HepG2 (cell line): ENCODE measurements at regions of chrX and their contacts with region 1.

Region 1: DNA sequence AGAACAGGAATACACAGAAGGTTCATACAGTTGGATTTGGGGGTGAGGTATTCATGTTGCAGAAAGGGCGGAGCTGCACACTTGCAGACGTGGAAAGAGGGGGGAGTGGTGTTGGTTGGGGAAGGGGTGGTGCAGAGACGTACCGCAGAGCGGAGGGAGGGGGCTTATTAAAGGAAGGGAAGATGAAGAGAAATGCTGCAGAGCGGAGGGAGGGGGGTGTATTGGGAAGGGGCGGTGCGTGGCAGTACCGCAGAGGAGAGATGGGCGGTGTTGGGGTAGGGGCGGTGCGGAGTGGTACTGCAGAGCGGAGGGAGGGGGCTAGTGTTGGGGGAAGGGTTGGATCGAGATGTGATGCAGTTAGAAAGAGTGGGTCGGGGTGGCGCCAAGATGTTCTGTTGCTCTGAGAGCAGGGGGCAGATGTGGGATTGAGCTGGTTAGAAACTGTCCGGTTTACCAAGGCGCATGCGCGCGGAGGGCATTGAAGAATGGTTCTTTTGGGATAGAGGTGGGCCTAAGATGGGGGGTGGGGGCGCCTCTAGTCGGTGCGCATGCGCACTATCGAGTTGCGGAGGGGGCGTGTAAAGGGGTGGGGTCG is 900 bp downstream of the TRO start:
- DNase-seq: peak; percentile 40
- ATAC-seq: peak; percentile 82
- H3K4me3 ChIP-seq: peak overlapping the region; percentile 60 to 75 (median 66)
- H3K27ac ChIP-seq: no peak overlapping the region
- H3K4me1 ChIP-seq: no peaks in the 10 kb centered on the region
- H3K27me3 ChIP-seq: no peaks in the 10 kb centered on the region; a peak in 1 of 5 replicates
- CTCF ChIP-seq: no peak
- EP300 ChIP-seq: no peak
- POLR2A ChIP-seq: no peak
- RAD21 ChIP-seq: no peak

Region 2: GRCh38 chrX:54994668-54995351 is 73.3 kb after region 1 on chrX:
- CTCF ChIA-PET with region 1: no interaction called
- POLR2A ChIA-PET with region 1: interaction called, 4 read pairs
- in situ Hi-C with region 1: no loop called
- intact Hi-C with region 1: loop called (anchors 2 kb)
- DNase-seq: no peak
- ATAC-seq: peak; percentile 62
- H3K4me3 ChIP-seq: peak overlapping the region in 1 of 3 experiments; percentile 62; a peak in 2 of 6 replicates
- H3K27ac ChIP-seq: peak overlapping the region; percentile 70
- H3K4me1 ChIP-seq: peaks cover 64% of the 10 kb centered on the region
- H3K27me3 ChIP-seq: no peaks in the 10 kb centered on the region; a peak in 1 of 5 replicates
- CTCF ChIP-seq: no peak
- EP300 ChIP-seq: no peak
- POLR2A ChIP-seq: no peak
- RAD21 ChIP-seq: no peak